Activated CD8-positive, alpha-beta T cell treated with anti-CD3 and anti-CD28 coated beads for 36 hours (primary cell): ENCODE measurements at regions of chr17 and their contacts with region 1.

Region 1: GRCh38 chr17:67376737-67377487 is at the start of gene PITPNC1:
- DNase-seq: peak; percentile 92
- ATAC-seq: peak; percentile 74
- H3K4me3 Mint-ChIP-seq: peak within 1 kb of the TSS; percentile 73
- H3K27ac Mint-ChIP-seq: peak within 1 kb of the TSS; percentile 90
- H3K4me1 Mint-ChIP-seq: peaks cover 40% of the 10 kb centered on the region
- H3K27me3 Mint-ChIP-seq: no peaks in the 10 kb centered on the region
- CTCF ChIP-seq: no peak
- total RNA-seq, gene PITPNC1: 51.8 to 56.3 TPM

Region 2: DNA sequence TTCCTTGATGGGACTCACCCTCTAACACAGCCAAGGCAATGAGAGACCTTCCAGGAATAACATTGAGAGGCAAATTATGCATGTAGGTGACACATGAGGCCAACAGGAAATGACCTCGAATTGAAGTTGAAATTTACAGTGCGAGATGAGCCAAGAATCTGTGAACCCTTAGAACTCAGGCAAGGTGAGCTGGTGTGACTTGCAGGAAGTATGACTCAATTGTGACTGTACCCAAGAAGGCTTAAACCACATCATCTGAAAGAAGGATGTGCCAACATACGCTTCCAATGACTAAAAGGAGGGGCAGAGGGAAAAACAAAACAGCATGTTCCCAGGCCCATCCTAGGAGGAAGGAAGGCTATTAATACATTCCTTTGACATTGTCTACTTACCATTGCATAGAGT is 45.0 kb after region 1 on chr17:
- CTCF ChIA-PET with region 1: interaction called, 18 read pairs
- POLR2A ChIA-PET with region 1: interaction called, 4 read pairs
- intact Hi-C with region 1: no loop called
- DNase-seq: peak; percentile 71
- ATAC-seq: peak; percentile 95
- H3K4me3 Mint-ChIP-seq: peak overlapping the region; percentile 33
- H3K27ac Mint-ChIP-seq: peak overlapping the region; percentile 88
- H3K4me1 Mint-ChIP-seq: peaks cover 86% of the 10 kb centered on the region
- H3K27me3 Mint-ChIP-seq: no peaks in the 10 kb centered on the region
- CTCF ChIP-seq: no peak

Region 3: GRCh38 chr17:67452681-67453554 is 76.0 kb after region 1 on chr17:
- CTCF ChIA-PET with region 1: interaction called, 12 read pairs
- POLR2A ChIA-PET with region 1: interaction called, 10 read pairs
- intact Hi-C with region 1: no loop called
- DNase-seq: peak; percentile 62
- ATAC-seq: peak; percentile 82
- H3K4me3 Mint-ChIP-seq: peak overlapping the region; percentile 72
- H3K27ac Mint-ChIP-seq: peak overlapping the region; percentile 98
- H3K4me1 Mint-ChIP-seq: peaks cover 83% of the 10 kb centered on the region
- H3K27me3 Mint-ChIP-seq: no peaks in the 10 kb centered on the region
- CTCF ChIP-seq: no peak

Region 4: GRCh38 chr17:67475236-67475937 is 98.5 kb after region 1 on chr17:
- CTCF ChIA-PET with region 1: interaction called, 201 read pairs
- POLR2A ChIA-PET with region 1: interaction called, 86 read pairs
- intact Hi-C with region 1: no loop called
- DNase-seq: peak; percentile 92
- ATAC-seq: peak; percentile 71
- H3K4me3 Mint-ChIP-seq: peak overlapping the region; percentile 68
- H3K27ac Mint-ChIP-seq: peak overlapping the region; percentile 92
- H3K4me1 Mint-ChIP-seq: peaks cover 67% of the 10 kb centered on the region
- H3K27me3 Mint-ChIP-seq: no peaks in the 10 kb centered on the region
- CTCF ChIP-seq: peak; percentile 87

Region 5: GRCh38 chr17:67602956-67603355 is 226.0 kb after region 1 on chr17:
- CTCF ChIA-PET with region 1: interaction called, 55 read pairs
- POLR2A ChIA-PET with region 1: interaction called, 3 read pairs
- intact Hi-C with region 1: loop called (anchors 5 kb)
- DNase-seq: peak; percentile 70
- ATAC-seq: peak; percentile 95
- H3K4me3 Mint-ChIP-seq: no peak overlapping the region
- H3K27ac Mint-ChIP-seq: peak overlapping the region; percentile 44
- H3K4me1 Mint-ChIP-seq: peaks cover 23% of the 10 kb centered on the region
- H3K27me3 Mint-ChIP-seq: no peaks in the 10 kb centered on the region
- CTCF ChIP-seq: peak; percentile 65

Region 6: DNA sequence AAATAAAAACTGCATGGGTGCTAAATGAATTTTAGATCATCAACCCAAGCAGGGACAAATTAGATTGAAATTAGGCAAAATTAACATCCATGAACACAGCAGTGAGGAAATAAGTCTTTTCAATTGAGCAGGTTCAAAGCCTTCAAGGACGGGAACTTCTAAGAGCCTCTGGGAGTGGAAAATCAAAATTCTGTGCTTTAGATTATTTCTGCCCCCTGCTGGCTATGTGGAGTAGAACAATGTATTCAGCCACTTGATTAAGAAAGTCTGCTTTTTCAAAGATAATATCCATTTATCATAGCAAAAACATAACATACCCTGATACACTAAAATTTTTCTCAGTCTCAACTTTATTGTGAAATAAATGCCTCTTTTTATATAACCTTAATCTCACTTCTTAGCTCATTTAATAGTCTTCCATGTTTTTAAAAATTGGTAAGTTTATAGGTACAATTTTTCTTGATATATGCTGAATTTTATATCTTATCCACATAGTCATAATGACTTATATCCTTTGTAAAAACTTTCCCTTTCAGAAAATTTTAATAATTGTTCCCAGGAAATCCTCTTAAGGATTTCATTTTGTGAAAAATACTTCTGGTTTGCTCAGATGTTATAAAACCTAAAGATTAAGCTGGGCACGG is 312.7 kb after region 1 on chr17:
- CTCF ChIA-PET with region 1: interaction called, 65 read pairs
- POLR2A ChIA-PET with region 1: interaction called, 3 read pairs
- intact Hi-C with region 1: loop called (anchors 1 kb)
- DNase-seq: peak; percentile 66
- ATAC-seq: no peak
- H3K4me3 Mint-ChIP-seq: no peak overlapping the region
- H3K27ac Mint-ChIP-seq: no peak overlapping the region
- H3K4me1 Mint-ChIP-seq: peaks cover 8% of the 10 kb centered on the region
- H3K27me3 Mint-ChIP-seq: no peaks in the 10 kb centered on the region
- CTCF ChIP-seq: peak; percentile 81